ENCODE measurements at regions of chr1 and their contacts with region 1.

Region 1: DNA sequence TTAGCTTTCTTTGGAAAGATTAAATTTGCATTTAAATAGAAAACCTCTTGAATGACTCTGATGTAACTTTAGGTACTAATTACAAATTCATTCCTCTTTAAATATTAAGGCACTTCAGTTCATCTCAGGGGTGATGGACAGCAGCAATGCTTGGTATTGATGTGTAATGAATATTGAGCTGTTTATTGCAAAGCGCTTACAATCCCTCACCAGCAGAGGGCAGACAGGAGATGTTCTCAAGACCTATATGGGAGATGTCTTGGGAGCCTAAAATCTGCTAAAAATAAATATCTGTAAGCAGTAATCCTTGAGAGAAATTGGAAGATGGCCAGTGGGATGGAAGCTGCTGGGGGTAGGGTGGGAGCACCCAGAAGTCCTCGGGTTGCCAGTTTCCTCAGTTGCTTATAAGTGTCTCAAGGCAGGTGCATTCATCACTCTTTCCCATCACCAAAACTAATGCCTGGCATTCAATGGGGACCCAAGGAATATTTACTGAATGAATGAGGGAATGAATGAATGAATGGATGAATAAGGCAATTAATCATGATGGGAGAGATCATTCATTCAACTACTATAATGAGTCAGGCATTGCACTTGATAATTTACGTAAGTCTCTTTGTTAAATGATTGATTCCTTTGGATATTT is 2.3 kb downstream of the KLHDC8A start:
- DNase-seq: peak; percentile 68
- ATAC-seq: no peak
- H3K4me3 Mint-ChIP-seq: no peak overlapping the region
- H3K27ac Mint-ChIP-seq: no peak overlapping the region
- H3K4me1 Mint-ChIP-seq: peaks cover 79% of the 10 kb centered on the region
- H3K27me3 Mint-ChIP-seq: no peaks in the 10 kb centered on the region; the same call in 1 of the 2 replicates
- CTCF ChIP-seq: peak; percentile 83

Region 2: DNA sequence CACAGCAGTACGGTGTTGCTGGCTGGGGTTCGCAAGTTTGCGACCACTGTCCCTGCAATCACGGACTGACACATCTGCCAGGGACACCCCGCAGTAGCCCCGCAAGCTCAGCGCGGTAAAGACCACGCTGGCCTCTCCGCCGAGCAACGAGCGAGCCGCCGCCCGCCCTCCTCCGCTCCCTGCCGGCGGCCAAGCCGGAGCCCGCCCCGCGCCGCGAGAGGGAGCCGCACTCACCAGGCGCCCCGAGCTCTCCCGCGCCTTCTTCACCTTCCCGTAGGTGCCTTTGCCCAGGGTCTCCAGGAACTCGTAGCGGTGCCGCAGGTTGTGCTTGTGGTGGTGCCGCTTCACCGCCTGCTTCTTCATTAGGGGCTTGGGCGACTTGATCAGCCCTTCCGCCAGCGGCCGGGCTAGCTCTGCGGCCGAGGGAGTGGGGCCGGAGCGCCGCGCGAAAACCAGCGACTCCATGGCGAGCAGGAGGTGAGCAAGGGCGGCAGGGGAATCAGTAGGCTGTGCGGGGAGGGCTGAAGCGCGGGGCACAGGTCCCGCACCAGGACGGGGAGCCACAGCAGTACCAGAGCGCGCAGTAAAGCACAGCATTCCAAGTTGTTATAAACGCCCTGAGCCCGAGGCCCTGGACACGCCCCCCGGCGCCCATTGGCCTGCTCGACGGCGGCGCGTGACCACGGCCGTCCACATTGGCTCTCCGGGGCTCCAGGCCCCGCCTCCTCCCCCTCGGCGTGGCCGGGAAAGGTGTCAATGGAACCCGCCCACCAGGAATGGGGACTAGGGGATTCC is 33.0 kb before region 1 on chr1 and contains the start of gene NUAK2:
- CTCF ChIA-PET with region 1: interaction called, 11 read pairs
- POLR2A ChIA-PET with region 1: interaction called, 4 read pairs
- DNase-seq: peak; percentile 98
- ATAC-seq: peak; percentile 88
- H3K4me3 Mint-ChIP-seq: peak within 1 kb of the TSS; percentile 96
- H3K27ac Mint-ChIP-seq: peak within 1 kb of the TSS; percentile 68
- H3K4me1 Mint-ChIP-seq: peaks cover 60% of the 10 kb centered on the region
- H3K27me3 Mint-ChIP-seq: peaks cover 38% of the 10 kb centered on the region
- CTCF ChIP-seq: no peak
- total RNA-seq, gene NUAK2: 8.7 to 10.8 TPM (median 10.8 TPM) in 3 replicates

Region 3: DNA sequence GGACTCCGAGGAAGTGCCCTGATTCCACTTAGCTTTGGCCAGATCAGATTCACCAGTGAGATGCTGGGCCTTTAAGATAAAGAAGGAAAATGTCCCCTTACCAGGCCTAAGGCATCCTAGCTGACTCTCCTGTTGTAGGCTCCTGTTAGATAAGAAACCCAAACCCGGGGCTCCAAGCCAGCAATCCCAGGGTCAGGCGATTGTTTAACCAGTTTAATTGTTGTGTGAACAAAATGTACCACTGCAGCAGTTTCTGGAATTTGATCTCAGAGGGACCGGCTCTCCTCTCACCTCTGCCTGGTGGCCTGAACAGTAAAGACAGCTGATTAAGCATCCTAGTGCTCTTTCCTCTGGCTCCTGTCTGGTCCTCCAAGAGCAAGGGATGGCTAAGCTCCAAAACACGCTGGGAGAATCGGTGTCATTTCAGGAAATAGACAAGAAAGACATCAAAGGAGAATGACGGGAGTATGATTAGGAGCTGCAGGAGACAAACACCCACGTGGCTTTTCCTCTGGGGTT is 11.6 kb after region 1 on chr1:
- CTCF ChIA-PET with region 1: interaction called, 29 read pairs
- POLR2A ChIA-PET with region 1: no interaction called
- DNase-seq: no peak
- ATAC-seq: no peak
- H3K4me3 Mint-ChIP-seq: no peak overlapping the region
- H3K27ac Mint-ChIP-seq: no peak overlapping the region
- H3K4me1 Mint-ChIP-seq: peaks cover 3% of the 10 kb centered on the region; the same call in 1 of the 2 replicates
- H3K27me3 Mint-ChIP-seq: no peaks in the 10 kb centered on the region; the same call in 1 of the 2 replicates
- CTCF ChIP-seq: no peak

Region 4: GRCh38 chr1:205396967-205397616 is 42.7 kb after region 1 on chr1:
- CTCF ChIA-PET with region 1: interaction called, 19 read pairs
- POLR2A ChIA-PET with region 1: no interaction called
- DNase-seq: peak; percentile 41
- ATAC-seq: peak; percentile 93
- H3K4me3 Mint-ChIP-seq: no peak overlapping the region
- H3K27ac Mint-ChIP-seq: no peak overlapping the region
- H3K4me1 Mint-ChIP-seq: peaks cover 6% of the 10 kb centered on the region
- H3K27me3 Mint-ChIP-seq: peaks cover 13% of the 10 kb centered on the region
- CTCF ChIP-seq: peak; percentile 71

Region 5: GRCh38 chr1:205458777-205459566 is 104.6 kb after region 1 on chr1:
- CTCF ChIA-PET with region 1: interaction called, 21 read pairs
- POLR2A ChIA-PET with region 1: no interaction called
- DNase-seq: peak; percentile 79
- ATAC-seq: peak; percentile 16; the same call in 1 of the 2 replicates
- H3K4me3 Mint-ChIP-seq: no peak overlapping the region
- H3K27ac Mint-ChIP-seq: no peak overlapping the region
- H3K4me1 Mint-ChIP-seq: peaks cover 23% of the 10 kb centered on the region
- H3K27me3 Mint-ChIP-seq: peaks cover 4% of the 10 kb centered on the region
- CTCF ChIP-seq: no peak

Region 6: DNA sequence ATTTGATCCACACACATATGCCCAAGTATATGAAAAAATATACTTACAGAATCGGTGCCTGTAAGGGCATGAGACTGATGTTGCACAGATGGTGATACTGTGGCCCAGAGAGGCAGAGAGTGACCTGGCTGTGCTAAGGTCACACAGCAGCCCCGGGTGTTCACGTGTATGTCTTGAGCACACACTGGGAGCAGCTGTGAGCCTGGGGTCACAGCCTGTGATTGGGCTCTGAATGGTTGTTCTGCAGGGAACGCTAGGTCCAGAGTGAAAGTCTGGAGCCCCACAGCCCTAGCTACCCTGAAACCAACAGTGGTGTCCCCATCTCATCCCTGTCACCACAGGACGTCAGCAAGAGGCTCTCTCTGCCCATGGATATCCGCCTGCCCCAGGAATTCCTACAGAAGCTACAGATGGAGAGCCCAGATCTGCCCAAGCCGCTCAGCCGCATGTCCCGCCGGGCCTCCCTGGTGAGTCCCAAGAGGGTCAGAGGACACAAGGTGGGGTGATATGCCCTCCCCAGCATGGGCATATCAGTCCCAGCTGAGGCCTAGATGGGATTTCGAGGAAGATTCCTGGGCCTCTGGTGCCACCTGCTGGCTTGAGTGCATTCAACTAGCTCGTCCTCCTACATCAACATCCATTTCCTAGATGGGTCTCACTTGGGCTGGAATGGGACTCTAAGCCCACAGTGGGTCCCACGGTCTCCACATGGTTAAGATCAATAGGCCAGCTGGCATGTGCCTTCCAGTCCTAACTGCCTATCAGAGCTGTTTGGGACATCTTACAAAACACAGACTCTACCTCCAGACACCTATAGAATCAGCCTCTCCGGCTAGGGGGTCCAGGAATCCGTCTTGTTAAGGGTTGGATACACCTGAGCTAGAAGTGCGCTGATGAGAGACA is 169.8 kb after region 1 on chr1:
- CTCF ChIA-PET with region 1: interaction called, 59 read pairs
- POLR2A ChIA-PET with region 1: no interaction called
- DNase-seq: peak; percentile 89
- ATAC-seq: peak; percentile 29
- H3K4me3 Mint-ChIP-seq: no peak overlapping the region
- H3K27ac Mint-ChIP-seq: no peak overlapping the region
- H3K4me1 Mint-ChIP-seq: peaks cover 45% of the 10 kb centered on the region
- H3K27me3 Mint-ChIP-seq: no peaks in the 10 kb centered on the region; the same call in none of the 2 replicates
- CTCF ChIP-seq: peak; percentile 81

Region 7: DNA sequence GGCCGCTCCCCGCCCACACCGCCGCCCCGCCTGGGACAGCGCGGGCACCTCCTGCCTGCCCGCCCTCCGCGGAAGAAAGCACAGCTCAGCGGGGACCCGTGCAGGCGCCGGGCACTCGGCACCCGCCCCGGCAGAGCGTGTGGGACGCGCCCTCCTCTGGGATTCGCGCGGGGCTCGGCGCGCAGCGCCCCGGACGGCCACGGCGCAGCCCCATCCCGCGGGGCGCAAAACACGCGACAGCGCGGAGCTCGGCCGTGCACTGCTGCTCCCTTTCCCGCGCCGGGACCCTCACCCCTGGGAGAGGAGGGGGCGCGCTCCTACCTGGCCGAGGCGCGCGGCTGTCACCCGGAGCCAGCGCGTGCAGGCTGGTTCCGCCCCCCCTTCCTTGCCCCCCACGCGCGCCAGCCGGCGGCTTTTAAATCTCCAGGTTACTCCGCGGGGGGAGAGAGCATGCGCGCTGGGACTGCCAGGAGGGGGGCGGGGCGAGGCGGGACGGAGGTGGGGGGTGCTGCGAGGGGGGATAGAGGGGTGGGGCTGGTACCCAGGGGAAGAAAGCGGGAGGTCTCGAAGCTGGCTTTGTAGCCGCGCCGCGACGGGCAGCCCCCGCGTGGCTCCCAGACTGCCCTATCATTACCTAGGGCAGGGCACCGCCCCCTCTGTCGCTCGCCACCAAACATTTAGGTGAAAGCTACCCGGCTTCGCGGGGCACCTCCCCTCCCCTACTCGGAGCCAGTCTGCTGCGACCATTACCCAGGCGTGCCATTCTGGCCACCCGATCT is 325.9 kb after region 1 on chr1 and contains the start of gene SLC45A3:
- CTCF ChIA-PET with region 1: no interaction called
- POLR2A ChIA-PET with region 1: no interaction called
- DNase-seq: peak; percentile 65
- ATAC-seq: peak; percentile 60
- H3K4me3 Mint-ChIP-seq: peak within 1 kb of the TSS; percentile 77
- H3K27ac Mint-ChIP-seq: no peak within 1 kb of the TSS
- H3K4me1 Mint-ChIP-seq: peaks cover 49% of the 10 kb centered on the region
- H3K27me3 Mint-ChIP-seq: peaks cover 7% of the 10 kb centered on the region
- CTCF ChIP-seq: no peak
- total RNA-seq, gene SLC45A3: 14.8 to 15.2 TPM (median 15.0 TPM) in 3 replicates